Activated CD4-positive, alpha-beta T cell treated with anti-CD3 and anti-CD28 coated beads, Interleukin-2, amount 10 ng/mL, durations not matched to agents 24 days and 14 days (primary cell): ENCODE measurements at regions of chr17 and their contacts with region 1.

Region 1: GRCh38 chr17:76264755-76265596 is at the start of gene UBALD2:
- DNase-seq: peak; percentile 100
- H3K4me3 Mint-ChIP-seq: peak within 1 kb of the TSS; percentile 94
- H3K27ac Mint-ChIP-seq: peak within 1 kb of the TSS; percentile 95
- H3K4me1 Mint-ChIP-seq: peaks cover 56% of the 10 kb centered on the region
- H3K27me3 Mint-ChIP-seq: no peaks in the 10 kb centered on the region
- total RNA-seq, gene UBALD2: 184 and 189 TPM in 2 replicates

Region 2: GRCh38 chr17:76204277-76204676 is 60.7 kb before region 1 on chr17:
- intact Hi-C with region 1: no loop called
- DNase-seq: no peak
- H3K4me3 Mint-ChIP-seq: no peak overlapping the region
- H3K27ac Mint-ChIP-seq: peak overlapping the region; percentile 17
- H3K4me1 Mint-ChIP-seq: peaks cover 50% of the 10 kb centered on the region
- H3K27me3 Mint-ChIP-seq: no peaks in the 10 kb centered on the region

Region 3: DNA sequence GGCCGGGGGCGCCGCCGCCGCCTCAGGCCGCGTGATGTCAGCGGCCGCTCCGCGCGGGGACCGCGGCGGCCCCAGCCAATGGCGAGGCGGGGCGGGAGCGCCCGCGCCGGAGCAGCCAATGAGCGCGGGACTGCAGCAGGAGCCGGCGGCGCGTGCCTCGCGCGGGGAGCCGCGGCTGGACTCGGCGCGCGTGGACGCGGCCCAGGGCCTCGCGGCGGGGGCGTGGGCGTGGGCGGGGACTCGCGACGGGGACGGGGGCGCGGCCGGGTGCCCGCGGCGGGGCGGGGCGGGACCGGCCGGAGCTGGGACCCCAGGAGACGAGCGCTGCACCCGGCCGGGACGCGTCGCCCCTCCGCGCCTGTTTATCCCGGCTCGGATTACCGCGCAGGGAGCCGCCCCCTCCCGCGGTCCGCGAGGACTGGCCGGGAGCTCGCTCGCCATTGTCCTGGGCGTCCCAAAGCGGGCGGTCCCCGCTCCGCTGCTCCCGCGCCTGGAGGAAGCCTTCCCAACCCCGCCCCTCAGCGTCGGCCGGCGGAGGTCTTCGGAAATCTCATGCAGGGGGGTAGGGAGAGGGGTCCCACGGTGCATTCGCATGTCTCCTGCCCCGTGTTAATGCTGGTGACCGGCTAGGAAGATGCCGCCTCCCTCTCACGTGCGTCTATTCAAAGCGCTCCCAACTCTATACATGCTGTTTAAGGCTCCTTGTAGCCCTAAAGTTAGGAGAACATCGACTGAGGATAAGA is 24.3 kb before region 1 on chr17 and contains the start of gene RNF157:
- intact Hi-C with region 1: loop called (anchors 1 kb)
- DNase-seq: peak; percentile 94
- H3K4me3 Mint-ChIP-seq: peak within 1 kb of the TSS; percentile 94
- H3K27ac Mint-ChIP-seq: peak within 1 kb of the TSS; percentile 90
- H3K4me1 Mint-ChIP-seq: peaks cover 57% of the 10 kb centered on the region
- H3K27me3 Mint-ChIP-seq: no peaks in the 10 kb centered on the region
- total RNA-seq, gene RNF157: 35.0 and 42.4 TPM in 2 replicates

Region 4: DNA sequence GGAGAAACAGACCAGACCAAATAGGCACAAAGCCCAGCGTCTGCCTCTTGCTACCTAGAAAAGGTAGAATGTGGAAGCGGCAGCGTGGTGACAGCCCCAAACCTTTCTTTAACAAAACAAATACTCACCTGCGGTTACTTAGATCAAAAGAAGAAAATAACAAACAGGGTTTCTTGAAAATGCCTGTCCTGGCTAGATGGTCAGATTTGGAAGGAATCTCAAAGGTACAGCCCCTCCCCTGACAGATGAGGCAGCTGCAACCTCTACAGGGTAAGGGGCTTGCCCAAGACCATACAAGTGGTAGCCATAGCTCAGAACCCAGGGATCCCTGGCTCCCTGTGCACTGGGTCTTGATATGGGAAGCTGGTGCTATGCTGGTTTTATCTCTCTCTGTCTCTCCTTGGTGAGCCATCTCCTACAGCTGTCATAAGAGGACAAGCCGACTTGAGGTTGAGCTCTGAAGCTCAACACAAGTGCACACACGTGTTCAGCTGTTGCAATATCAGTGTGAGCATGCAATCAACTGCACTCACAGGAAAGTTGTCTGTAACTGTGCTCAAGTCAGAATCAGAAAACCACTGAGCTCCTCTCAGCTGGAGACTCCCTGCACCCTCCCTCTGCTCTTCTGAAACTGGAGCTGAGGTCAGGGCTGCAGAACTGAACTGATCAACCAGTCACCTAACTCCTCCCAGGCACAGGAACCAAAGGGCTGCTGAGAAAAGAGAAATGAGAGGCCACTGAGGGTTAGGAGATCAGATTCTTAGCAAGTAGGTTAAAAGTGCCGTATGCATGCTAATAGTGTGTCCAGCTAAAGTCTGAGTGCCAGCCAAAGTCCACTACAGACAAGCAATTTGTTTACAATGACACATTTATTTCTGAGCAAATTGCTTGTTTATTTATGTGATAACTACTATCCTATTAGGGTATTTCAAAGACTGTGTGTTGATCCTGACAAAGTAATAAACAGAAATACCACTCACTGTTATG is 18.6 kb before region 1 on chr17:
- intact Hi-C with region 1: loop called (anchors 1 kb)
- DNase-seq: peak; percentile 94
- H3K4me3 Mint-ChIP-seq: peak overlapping the region; percentile 75
- H3K27ac Mint-ChIP-seq: peak overlapping the region; percentile 83
- H3K4me1 Mint-ChIP-seq: peaks cover 69% of the 10 kb centered on the region
- H3K27me3 Mint-ChIP-seq: no peaks in the 10 kb centered on the region